Heart left ventricle (tissue), 16 donors: ENCODE measurements at regions of chr11 and their contacts with region 1.

Region 1: DNA sequence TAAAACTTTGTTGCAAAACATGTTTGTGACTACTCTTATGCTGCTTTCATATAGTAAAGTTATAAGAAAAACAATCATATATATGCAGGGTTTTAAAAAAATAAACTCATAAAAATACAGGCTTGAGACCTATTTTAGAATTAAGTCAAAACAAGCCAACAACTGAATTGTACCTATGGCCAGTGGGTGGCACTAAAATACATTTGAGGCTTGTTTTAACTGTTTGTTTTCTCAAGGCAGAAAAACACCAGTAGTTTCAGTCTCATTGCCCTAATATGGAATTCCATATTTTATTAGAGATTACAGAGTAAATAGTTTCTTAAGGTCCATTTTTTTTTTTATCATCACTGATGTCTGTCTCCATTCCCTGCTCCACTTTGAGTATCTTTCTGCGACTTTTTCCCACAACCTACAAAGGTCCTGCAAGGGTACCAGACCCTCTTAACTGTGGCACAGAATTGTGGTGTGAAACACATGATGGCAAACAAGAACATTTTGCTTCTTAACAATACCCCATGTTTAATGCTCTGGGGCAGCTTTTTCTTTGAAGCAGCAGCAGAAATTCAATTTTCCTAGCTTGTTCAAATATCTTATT is 8.5 kb upstream of the CCDC89 start:
- DNase-seq: no peak
- ATAC-seq: no peak
- H3K4me3 ChIP-seq: no peak overlapping the region
- H3K27ac ChIP-seq: no peak overlapping the region
- H3K4me1 ChIP-seq: peaks cover 0 to 2% (median 0%) of the 10 kb centered on the region in 12 donors
- H3K27me3 ChIP-seq: no peaks in the 10 kb centered on the region
- CTCF ChIP-seq: peak; percentile 22 to 75 (median 52)
- POLR2A ChIP-seq: no peak

Region 2: GRCh38 chr11:85826116-85826855 is 131.8 kb after region 1 on chr11:
- intact Hi-C with region 1: loop called in 9 of 10 experiments (anchors 1 to 10 kb)
- DNase-seq: peak in 4 of 5 donors; percentile 27 to 38 (median 32)
- ATAC-seq: peak in 3 of 4 donors; percentile 68 to 76 (median 74)
- H3K4me3 ChIP-seq: no peak overlapping the region
- H3K27ac ChIP-seq: no peak overlapping the region
- H3K4me1 ChIP-seq: peaks cover 0 to 14% (median 0%) of the 10 kb centered on the region in 12 donors
- H3K27me3 ChIP-seq: no peaks in the 10 kb centered on the region
- CTCF ChIP-seq: peak; percentile 27 to 60 (median 52)
- POLR2A ChIP-seq: no peak